Calu3 (cell line): ENCODE measurements at regions of chr6 and their contacts with region 1.

Region 1: GRCh38 chr6:70310063-70310694 is 7.3 kb upstream of the COL9A1 start:
- DNase-seq: peak; percentile 48
- H3K4me3 Mint-ChIP-seq: no peak overlapping the region
- H3K27ac Mint-ChIP-seq: no peak overlapping the region
- H3K4me1 Mint-ChIP-seq: peaks cover 33% of the 10 kb centered on the region
- H3K27me3 Mint-ChIP-seq: peaks cover 73% of the 10 kb centered on the region
- CTCF ChIP-seq: peak; percentile 52

Region 2: GRCh38 chr6:70221025-70221714 is 89.0 kb before region 1 on chr6:
- CTCF ChIA-PET with region 1: interaction called, 40 read pairs
- intact Hi-C with region 1: loop called (anchors 1 kb)
- DNase-seq: peak; percentile 28
- H3K4me3 Mint-ChIP-seq: no peak overlapping the region
- H3K27ac Mint-ChIP-seq: no peak overlapping the region
- H3K4me1 Mint-ChIP-seq: peaks cover 26% of the 10 kb centered on the region
- H3K27me3 Mint-ChIP-seq: peaks cover 13% of the 10 kb centered on the region
- CTCF ChIP-seq: peak; percentile 77

Region 3: DNA sequence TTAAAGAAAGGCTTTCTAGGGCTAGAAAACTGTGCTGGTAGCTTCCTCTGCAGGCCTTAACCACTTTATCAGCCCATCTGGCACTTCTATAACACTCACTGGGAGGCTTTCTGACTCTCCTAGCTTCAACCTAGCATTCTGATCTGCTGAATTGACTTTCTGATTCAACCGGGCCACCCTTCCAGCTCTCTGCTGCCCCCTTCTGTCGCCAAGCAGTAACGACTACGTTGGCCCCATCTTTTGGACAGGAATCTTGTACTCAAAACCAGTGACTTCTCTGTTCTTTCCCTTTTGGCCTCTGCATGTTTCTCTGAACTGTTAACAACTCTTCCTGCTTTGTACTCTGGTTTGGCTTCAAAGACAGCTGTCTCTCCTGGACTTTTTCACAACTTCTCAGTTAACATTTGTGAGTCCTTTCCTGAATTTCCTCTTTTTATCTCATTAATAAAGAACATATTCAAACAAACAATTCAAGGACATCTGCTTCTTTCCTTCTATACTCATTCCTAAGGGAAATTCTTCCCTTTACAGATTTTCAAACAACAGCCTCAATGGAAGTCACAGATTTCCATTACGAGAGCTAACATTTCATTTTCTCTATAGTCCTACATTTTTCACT is 59.3 kb after region 1 on chr6:
- CTCF ChIA-PET with region 1: interaction called, 107 read pairs
- intact Hi-C with region 1: loop called (anchors 1 kb)
- DNase-seq: peak; percentile 86
- H3K4me3 Mint-ChIP-seq: no peak overlapping the region
- H3K27ac Mint-ChIP-seq: no peak overlapping the region
- H3K4me1 Mint-ChIP-seq: peaks cover 14% of the 10 kb centered on the region
- H3K27me3 Mint-ChIP-seq: peaks cover 40% of the 10 kb centered on the region
- CTCF ChIP-seq: peak; percentile 93

Region 4: GRCh38 chr6:70421509-70421908 is 111.3 kb after region 1 on chr6:
- CTCF ChIA-PET with region 1: interaction called, 4 read pairs
- intact Hi-C with region 1: loop called (anchors 2 kb)
- DNase-seq: no peak
- H3K4me3 Mint-ChIP-seq: no peak overlapping the region
- H3K27ac Mint-ChIP-seq: no peak overlapping the region
- H3K4me1 Mint-ChIP-seq: peaks cover 55% of the 10 kb centered on the region
- H3K27me3 Mint-ChIP-seq: no peaks in the 10 kb centered on the region
- CTCF ChIP-seq: no peak

Region 5: GRCh38 chr6:70566751-70567382 is 256.7 kb after region 1 on chr6 and contains the start of gene SDHAF4:
- CTCF ChIA-PET with region 1: no interaction called
- intact Hi-C with region 1: loop called (anchors 5 kb)
- DNase-seq: peak; percentile 97
- H3K4me3 Mint-ChIP-seq: peak within 1 kb of the TSS; percentile 72
- H3K27ac Mint-ChIP-seq: peak within 1 kb of the TSS; percentile 39
- H3K4me1 Mint-ChIP-seq: peaks cover 7% of the 10 kb centered on the region
- H3K27me3 Mint-ChIP-seq: no peaks in the 10 kb centered on the region
- CTCF ChIP-seq: no peak
- total RNA-seq, gene SDHAF4: 13.3 and 21.0 TPM in 2 replicates

Region 6: GRCh38 chr6:70884074-70884983 is 574.1 kb after region 1 on chr6:
- CTCF ChIA-PET with region 1: interaction called, 5 read pairs
- intact Hi-C with region 1: loop called (anchors 2 kb)
- DNase-seq: peak; percentile 80
- H3K4me3 Mint-ChIP-seq: no peak overlapping the region
- H3K27ac Mint-ChIP-seq: no peak overlapping the region
- H3K4me1 Mint-ChIP-seq: no peaks in the 10 kb centered on the region
- H3K27me3 Mint-ChIP-seq: peaks cover 46% of the 10 kb centered on the region
- CTCF ChIP-seq: peak; percentile 97

Region 7: DNA sequence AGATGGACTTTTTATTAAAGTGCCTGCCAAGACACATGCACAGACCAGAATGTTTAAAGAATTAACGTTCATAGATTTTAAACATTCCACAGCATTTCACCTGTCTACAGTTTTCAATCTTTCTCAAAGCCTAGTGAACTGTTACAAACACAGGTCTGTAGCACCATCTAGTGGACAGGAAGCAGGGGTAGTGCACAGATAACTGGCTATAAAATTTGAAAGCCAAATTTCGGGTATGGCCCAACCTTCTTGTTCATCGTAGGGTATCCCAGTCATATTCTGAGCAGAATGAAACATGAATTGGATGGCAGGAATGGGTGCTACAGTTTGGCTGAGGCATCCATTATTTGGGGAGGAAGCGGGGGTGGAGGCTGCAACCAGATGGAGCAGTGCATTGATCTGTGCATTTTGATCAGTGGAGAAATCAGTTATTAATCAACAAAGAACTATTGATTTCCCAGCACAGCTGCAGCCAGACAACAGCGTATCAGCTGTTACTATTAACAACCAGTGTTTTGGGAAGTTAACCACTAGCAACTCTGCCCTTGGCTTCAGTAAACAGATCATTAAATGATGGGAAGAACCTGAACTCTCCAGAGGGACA is 702.8 kb after region 1 on chr6:
- CTCF ChIA-PET with region 1: no interaction called
- intact Hi-C with region 1: loop called (anchors 2 kb)
- DNase-seq: peak; percentile 50
- H3K4me3 Mint-ChIP-seq: no peak overlapping the region
- H3K27ac Mint-ChIP-seq: no peak overlapping the region
- H3K4me1 Mint-ChIP-seq: no peaks in the 10 kb centered on the region
- H3K27me3 Mint-ChIP-seq: peaks cover 33% of the 10 kb centered on the region
- CTCF ChIP-seq: peak; percentile 85